ENCODE measurements at regions of chr1 and their contacts with region 1.

Region 1: GRCh38 chr1:19704247-19705113 is 39.8 kb downstream of the HTR6 start:
- DNase-seq: peak; percentile 66
- H3K4me3 Mint-ChIP-seq: no peak overlapping the region
- H3K27ac Mint-ChIP-seq: no peak overlapping the region
- H3K4me1 Mint-ChIP-seq: peaks cover 9% of the 10 kb centered on the region
- H3K27me3 Mint-ChIP-seq: no peaks in the 10 kb centered on the region

Region 2: DNA sequence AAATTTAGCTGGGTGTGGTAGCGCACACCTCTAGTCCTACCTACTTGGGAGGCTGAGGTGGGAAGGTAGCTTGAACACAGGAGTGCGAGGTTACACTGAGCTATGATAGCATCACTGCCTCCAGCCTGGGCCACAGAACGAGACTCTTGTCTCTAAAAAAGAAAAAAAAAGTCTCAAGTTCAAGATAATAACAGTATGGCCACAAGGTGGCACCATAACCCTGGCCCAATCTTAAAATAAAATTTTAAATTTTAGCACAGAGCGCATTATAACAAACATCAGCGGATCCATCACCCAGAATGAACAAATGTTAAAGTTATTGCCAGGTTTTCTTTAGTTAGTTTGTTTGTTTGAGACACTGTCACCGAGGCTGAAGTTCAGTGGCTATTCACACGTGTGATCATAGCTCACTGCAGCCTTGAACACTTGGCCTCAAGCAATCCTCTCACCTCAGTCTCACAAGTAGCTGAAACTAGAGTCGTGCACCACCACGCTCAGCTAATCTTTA is 42.7 kb before region 1 on chr1:
- CTCF ChIA-PET with region 1: interaction called, 84 read pairs
- DNase-seq: peak; percentile 61
- H3K4me3 Mint-ChIP-seq: no peak overlapping the region
- H3K27ac Mint-ChIP-seq: no peak overlapping the region
- H3K4me1 Mint-ChIP-seq: peaks cover 28% of the 10 kb centered on the region
- H3K27me3 Mint-ChIP-seq: peaks cover 60% of the 10 kb centered on the region

Region 3: DNA sequence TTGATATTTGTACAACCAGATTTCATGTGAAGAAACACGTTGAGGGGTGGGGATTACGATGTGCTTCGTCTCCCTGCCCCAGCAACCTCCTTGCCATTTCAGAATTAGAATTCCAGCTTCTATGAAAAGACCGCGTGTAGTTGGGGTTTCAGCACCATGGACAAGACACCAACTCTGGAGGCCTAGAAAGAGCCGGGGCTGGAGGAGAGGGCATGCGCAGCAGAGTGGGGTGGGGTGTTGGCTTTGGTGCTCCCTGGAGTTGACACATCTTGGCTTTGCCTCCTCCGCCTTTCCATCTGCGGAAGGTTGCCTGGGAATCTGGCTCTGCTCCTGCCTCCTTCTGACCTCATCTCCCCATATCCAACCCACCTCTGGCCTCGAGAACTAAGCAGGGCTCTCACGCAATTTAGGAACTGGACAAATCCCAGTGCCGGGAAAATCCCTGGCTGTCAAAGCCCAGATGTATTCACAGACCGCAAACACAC is 28.0 kb before region 1 on chr1:
- CTCF ChIA-PET with region 1: interaction called, 11 read pairs
- DNase-seq: peak; percentile 60
- H3K4me3 Mint-ChIP-seq: no peak overlapping the region
- H3K27ac Mint-ChIP-seq: no peak overlapping the region
- H3K4me1 Mint-ChIP-seq: no peaks in the 10 kb centered on the region
- H3K27me3 Mint-ChIP-seq: peaks cover 31% of the 10 kb centered on the region

Region 4: GRCh38 chr1:19684677-19685076 is 19.8 kb before region 1 on chr1:
- CTCF ChIA-PET with region 1: interaction called, 12 read pairs
- DNase-seq: no peak
- H3K4me3 Mint-ChIP-seq: no peak overlapping the region
- H3K27ac Mint-ChIP-seq: no peak overlapping the region
- H3K4me1 Mint-ChIP-seq: peaks cover 24% of the 10 kb centered on the region
- H3K27me3 Mint-ChIP-seq: no peaks in the 10 kb centered on the region

Region 5: GRCh38 chr1:19715334-19716203 is 11.1 kb after region 1 on chr1:
- CTCF ChIA-PET with region 1: interaction called, 12 read pairs
- DNase-seq: peak; percentile 92
- H3K4me3 Mint-ChIP-seq: no peak overlapping the region
- H3K27ac Mint-ChIP-seq: no peak overlapping the region
- H3K4me1 Mint-ChIP-seq: peaks cover 16% of the 10 kb centered on the region
- H3K27me3 Mint-ChIP-seq: no peaks in the 10 kb centered on the region

Measured in activated naive CD4-positive, alpha-beta T cell treated with anti-CD3 and anti-CD28 coated beads, Interleukin-2, amount 10 ng/mL, durations not matched to agents 7 days and 5 days (primary cell).